Activated T-helper 1 cell treated with anti-CD3 and anti-CD28 coated beads, Interleukin-12 subunit alpha, Interleukin-12 subunit beta, Interleukin-2, Interleukin-4 antibody, amounts not matched to agents 30 ng/mL and 10 ng/mL and 1 ng/mL, durations not matched to agents 14 hours and 24 hours and 36 hours (primary cell): ENCODE measurements at regions of chr12 and their contacts with region 1.

Region 1: DNA sequence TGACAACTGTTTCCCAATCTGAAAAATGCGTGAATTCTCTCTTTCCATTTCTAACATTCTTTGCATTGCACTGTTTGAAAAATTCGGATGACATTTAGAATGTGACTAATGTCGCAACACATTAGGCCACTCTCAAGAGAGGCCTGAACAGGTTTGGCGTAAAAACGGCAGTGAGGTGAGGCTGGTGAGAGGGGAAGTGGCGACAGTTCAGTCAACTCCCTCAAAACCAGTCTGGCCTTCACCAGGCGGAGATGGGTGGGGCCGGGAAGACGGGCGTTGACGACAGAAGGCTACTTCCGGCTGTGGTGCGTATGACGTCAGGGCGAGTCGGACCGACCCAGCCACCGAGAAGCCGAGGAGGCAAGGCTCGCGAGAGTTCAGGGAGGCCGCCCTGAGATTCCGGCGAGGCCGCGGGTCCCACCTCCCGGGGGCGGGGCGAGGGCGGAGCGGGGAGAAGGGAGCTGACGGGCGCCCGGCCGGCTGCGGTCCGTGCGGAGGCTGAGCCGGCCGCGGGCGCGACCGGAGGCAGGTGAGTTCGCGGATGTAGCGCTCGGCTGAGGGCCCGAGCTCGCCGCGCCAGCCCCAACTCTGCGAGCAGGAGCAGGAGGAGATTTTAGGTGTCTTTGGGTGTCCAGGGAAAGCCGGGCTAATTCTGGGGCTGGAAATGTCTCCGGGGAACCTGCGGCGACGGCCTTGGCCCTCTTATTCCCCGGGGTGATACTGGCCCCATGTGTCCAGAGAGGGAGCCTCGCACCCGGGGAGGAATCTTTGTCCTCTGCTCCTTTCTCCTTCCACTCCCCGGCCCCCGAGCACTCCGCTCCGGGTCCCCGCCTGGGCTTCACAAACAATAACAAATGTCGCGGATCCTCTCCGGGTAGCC is at the start of gene STK38L:
- DNase-seq: peak; percentile 96
- H3K4me3 Mint-ChIP-seq: peak within 1 kb of the TSS; percentile 100
- H3K27ac Mint-ChIP-seq: peak within 1 kb of the TSS; percentile 99
- H3K4me1 Mint-ChIP-seq: peaks cover 60% of the 10 kb centered on the region
- H3K27me3 Mint-ChIP-seq: no peaks in the 10 kb centered on the region
- total RNA-seq, gene STK38L: 20.5 and 23.3 TPM in 2 replicates

Region 2: DNA sequence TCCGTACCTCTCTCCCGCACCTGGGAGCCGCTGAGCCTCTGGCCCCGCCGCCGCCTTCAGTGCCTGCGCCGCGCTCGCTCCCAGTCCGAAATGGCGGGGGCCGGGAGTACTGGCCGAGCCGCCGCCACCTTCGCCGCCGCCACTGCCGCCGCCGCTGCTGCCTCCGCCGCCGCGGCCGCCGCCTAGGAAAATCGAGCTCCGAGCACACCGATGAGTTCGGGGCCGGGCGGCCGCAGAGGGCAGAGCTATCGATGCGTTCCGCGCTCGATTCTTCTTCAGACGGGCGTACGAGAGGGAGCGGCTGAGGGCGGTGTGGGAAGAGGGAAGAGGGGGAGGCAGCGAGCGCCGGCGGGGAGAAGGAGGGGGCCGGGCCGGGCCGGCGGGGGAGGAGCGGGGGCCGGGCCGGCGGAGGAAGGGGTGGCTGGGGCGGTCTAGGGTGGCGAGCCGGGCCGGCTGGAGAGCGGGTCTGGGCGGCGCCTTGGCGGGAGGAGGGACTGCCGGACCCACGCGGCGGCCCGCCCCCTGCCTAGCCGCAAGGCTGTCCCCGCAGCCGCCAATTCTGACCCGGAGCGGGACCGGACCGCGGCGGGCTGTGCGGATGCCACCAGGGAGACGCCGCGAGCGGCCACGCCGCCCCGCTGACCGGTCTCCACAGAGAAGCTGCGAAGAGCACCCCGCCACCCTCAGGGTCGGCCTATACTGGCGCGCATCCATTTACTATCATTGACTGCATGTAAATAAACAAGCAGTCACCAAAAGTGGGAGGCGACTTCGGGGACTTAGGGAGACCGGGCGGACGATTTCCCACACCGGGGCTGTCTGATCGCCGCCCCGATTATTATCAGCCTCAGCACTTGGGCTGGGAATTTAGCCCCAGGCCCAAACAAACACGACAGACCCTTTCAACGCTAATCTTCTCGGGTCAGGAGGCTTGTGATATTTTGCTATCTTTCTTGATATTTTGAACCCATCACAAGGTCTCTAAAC is 1993.0 kb before region 1 on chr12 and contains the start of gene KRAS:
- intact Hi-C with region 1: loop called (anchors 10 kb)
- DNase-seq: peak; percentile 89
- H3K4me3 Mint-ChIP-seq: peak within 1 kb of the TSS; percentile 90
- H3K27ac Mint-ChIP-seq: peak within 1 kb of the TSS; percentile 96
- H3K4me1 Mint-ChIP-seq: peaks cover 45% of the 10 kb centered on the region
- H3K27me3 Mint-ChIP-seq: peaks cover 10% of the 10 kb centered on the region
- total RNA-seq, gene KRAS: 43.1 and 43.3 TPM in 2 replicates

Region 3: GRCh38 chr12:27034607-27035293 is 209.3 kb before region 1 on chr12:
- intact Hi-C with region 1: loop called (anchors 2 kb)
- DNase-seq: no peak
- H3K4me3 Mint-ChIP-seq: no peak overlapping the region
- H3K27ac Mint-ChIP-seq: no peak overlapping the region
- H3K4me1 Mint-ChIP-seq: no peaks in the 10 kb centered on the region
- H3K27me3 Mint-ChIP-seq: no peaks in the 10 kb centered on the region

Region 4: GRCh38 chr12:27179400-27180214 is 64.4 kb before region 1 on chr12:
- intact Hi-C with region 1: loop called (anchors 1 kb)
- DNase-seq: peak; percentile 25
- H3K4me3 Mint-ChIP-seq: peak overlapping the region; percentile 19
- H3K27ac Mint-ChIP-seq: peak overlapping the region; percentile 66
- H3K4me1 Mint-ChIP-seq: peaks cover 53% of the 10 kb centered on the region
- H3K27me3 Mint-ChIP-seq: no peaks in the 10 kb centered on the region

Region 5: GRCh38 chr12:27305673-27306456 is 61.8 kb after region 1 on chr12:
- intact Hi-C with region 1: loop called (anchors 2 kb)
- DNase-seq: no peak
- H3K4me3 Mint-ChIP-seq: no peak overlapping the region
- H3K27ac Mint-ChIP-seq: no peak overlapping the region
- H3K4me1 Mint-ChIP-seq: peaks cover 14% of the 10 kb centered on the region
- H3K27me3 Mint-ChIP-seq: no peaks in the 10 kb centered on the region

Region 6: GRCh38 chr12:27498149-27498548 is 254.1 kb after region 1 on chr12:
- intact Hi-C with region 1: loop called (anchors 5 kb)
- DNase-seq: peak; percentile 16
- H3K4me3 Mint-ChIP-seq: peak overlapping the region; percentile 3
- H3K27ac Mint-ChIP-seq: peak overlapping the region; percentile 76
- H3K4me1 Mint-ChIP-seq: peaks cover 53% of the 10 kb centered on the region
- H3K27me3 Mint-ChIP-seq: no peaks in the 10 kb centered on the region